ENCODE measurements at regions of chr16 and their contacts with region 1.

Region 1: GRCh38 chr16:11797166-11797956 is at the start of gene ZC3H7A:
- DNase-seq: peak; percentile 94

Region 2: DNA sequence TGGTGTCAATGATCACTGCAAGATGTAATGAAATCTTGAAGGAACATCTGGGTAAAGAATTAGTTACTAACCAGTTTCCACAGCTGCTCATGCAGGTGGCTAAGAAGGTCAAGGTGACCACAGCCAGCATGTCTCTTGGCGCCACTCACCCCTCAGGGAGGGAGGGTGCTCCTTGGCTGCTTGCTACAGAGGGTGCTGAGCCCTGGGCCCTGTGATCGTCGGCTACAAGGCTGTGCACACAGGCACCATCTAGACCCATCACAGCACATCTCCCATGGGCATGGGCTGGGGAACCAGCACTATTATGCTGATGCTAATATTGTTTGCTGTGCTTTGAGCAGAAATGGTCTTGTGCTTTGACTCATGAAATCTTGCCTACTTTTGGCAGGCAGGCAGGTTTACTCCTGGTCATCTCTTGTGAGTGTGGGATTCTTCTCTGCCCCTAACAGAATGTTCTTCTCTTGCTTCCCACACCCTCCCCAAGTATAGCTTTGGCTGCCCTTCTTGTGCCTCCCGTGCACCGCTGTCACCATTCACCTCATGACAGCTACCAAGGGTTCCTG is 91.1 kb before region 1 on chr16:
- CTCF ChIA-PET with region 1: no interaction called
- POLR2A ChIA-PET with region 1: no interaction called
- DNase-seq: no peak

Region 3: GRCh38 chr16:11727796-11728543 is 69.4 kb before region 1 on chr16:
- CTCF ChIA-PET with region 1: no interaction called
- POLR2A ChIA-PET with region 1: no interaction called
- DNase-seq: no peak

Region 4: GRCh38 chr16:11742539-11743307 is 54.6 kb before region 1 on chr16 and contains the start of gene TXNDC11:
- CTCF ChIA-PET with region 1: interaction called, 11 read pairs
- POLR2A ChIA-PET with region 1: interaction called, 24 read pairs
- DNase-seq: peak; percentile 99

Measured in HEK293T (cell line).